CD4-positive, alpha-beta memory T cell (primary cell): ENCODE measurements at regions of chr2 and their contacts with region 1.

Region 1: DNA sequence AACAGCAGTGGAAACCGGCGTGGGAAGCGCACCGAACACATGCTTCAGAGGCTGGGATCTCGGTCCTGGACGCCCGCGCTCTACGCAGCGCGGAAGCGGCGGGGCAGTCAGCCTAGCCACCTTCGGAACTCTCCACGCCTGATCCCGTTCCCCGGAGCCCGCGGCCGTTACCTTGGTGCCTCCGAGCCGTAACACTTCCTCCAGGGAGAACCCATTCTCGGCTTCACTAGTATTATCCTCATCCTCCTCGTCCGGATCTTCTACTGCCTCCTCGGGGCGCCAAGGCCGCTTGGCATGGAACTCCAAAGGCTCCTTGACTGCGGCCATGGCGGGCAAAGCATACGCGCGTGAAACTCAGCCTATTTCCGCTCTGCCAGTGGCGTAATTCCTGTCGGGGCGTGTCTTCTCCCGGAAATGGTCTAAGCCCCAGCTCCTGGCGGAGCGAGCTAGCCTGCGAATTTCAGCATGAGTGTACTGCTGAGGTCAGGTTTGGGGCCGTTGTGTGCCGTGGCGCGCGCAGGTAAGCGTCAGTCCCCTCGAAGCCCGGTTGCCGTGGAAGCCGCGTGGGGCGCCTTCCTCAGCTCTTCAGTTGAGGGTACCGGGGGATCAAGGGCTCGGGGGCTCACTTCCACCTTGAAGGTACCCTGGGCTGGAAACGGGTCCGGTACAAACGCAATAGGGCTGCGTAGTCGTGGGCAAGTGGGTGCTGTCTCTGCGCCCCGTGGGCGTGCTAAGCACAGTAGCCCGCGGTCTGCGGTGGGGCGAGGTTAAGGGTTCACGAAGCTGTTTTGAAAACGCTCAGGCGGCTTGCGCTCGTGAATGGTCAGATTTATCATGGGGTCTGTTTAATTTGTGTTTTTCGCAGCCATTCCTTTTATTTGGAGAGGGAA is at the starts of genes CEBPZ and NDUFAF7:
- DNase-seq: peak; percentile 85 to 94 (median 88)
- H3K4me3 ChIP-seq: peak within 1 kb of the TSS; percentile 94 to 98
- H3K4me3 Mint-ChIP-seq: no peak within 1 kb of the TSS
- H3K27ac ChIP-seq: peak within 1 kb of the TSS; percentile 86
- H3K27ac Mint-ChIP-seq: no peak within 1 kb of the TSS
- H3K4me1 ChIP-seq: peaks cover 46% of the 10 kb centered on the region
- H3K4me1 Mint-ChIP-seq: peaks cover 22 to 41% (median 32%) of the 10 kb centered on the region in 4 donors
- H3K27me3 ChIP-seq: no peaks in the 10 kb centered on the region
- H3K27me3 Mint-ChIP-seq: no peaks in the 10 kb centered on the region
- total RNA-seq, gene CEBPZ: 68.5 to 70.9 TPM
- total RNA-seq, gene NDUFAF7: 36.8 to 37.9 TPM

Region 2: DNA sequence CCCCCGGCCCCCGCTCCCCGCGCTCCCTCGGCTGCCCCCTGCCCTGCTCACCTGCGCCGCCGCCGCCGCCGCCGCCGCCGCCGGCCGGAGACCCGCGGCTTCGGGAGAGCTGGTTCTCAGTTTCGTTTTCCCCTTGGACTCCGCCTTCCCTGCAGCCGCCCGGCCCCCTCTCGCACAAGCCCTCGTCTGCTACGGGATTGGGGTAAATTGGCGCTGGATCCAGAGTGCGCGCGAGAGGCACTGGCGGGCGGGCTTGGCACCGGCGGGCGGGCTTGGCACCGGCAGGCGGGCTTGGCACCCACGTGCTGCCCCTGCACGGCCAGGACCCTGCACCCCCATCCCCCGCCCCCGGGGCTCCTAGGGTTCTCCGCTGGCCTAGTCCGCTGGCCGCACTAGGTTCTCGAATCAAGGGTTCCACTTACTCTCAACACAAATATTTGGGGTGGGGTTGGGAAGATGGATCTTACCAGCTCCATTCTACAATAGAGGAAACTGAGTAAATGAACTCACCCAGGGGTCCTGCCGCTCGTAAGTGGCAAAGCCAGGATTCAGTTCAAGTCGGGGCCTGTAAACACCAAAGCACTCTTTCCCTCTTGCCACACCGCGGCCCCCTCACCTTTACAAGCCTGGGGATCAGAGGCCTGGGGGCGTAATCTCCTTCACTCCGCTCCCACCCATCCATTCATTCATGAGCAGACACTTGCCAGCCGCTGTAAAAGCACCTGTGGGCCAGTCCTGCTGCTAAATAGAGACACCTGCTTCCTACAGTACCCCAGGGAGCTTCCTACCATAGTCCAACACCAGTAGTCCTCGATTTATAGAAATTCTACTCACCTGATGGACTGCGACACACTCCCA is 74.4 kb before region 1 on chr2 and contains the start of gene EIF2AK2:
- CTCF ChIA-PET with region 1: no interaction called
- POLR2A ChIA-PET with region 1: interaction called, 6 read pairs
- intact Hi-C with region 1: loop called (anchors 1 kb)
- DNase-seq: peak; percentile 84 to 90 (median 87)
- H3K4me3 ChIP-seq: peak within 1 kb of the TSS; percentile 62 to 63
- H3K4me3 Mint-ChIP-seq: peak within 1 kb of the TSS; percentile 88 to 96 (median 94)
- H3K27ac ChIP-seq: peak within 1 kb of the TSS; percentile 72
- H3K27ac Mint-ChIP-seq: peak within 1 kb of the TSS; percentile 86 to 96 (median 92)
- H3K4me1 ChIP-seq: peaks cover 26% of the 10 kb centered on the region
- H3K4me1 Mint-ChIP-seq: peaks cover 34 to 54% (median 49%) of the 10 kb centered on the region in 4 donors
- H3K27me3 ChIP-seq: no peaks in the 10 kb centered on the region
- H3K27me3 Mint-ChIP-seq: no peaks in the 10 kb centered on the region
- total RNA-seq, gene EIF2AK2: 28.8 to 31.6 TPM

Region 3: GRCh38 chr2:37168217-37168981 is 63.1 kb before region 1 on chr2:
- CTCF ChIA-PET with region 1: interaction called, 4 read pairs
- POLR2A ChIA-PET with region 1: no interaction called
- intact Hi-C with region 1: loop called (anchors 1 kb)
- DNase-seq: peak in 4 of 5 donors; percentile 32 to 45 (median 36)
- H3K4me3 ChIP-seq: no peak overlapping the region
- H3K4me3 Mint-ChIP-seq: no peak overlapping the region
- H3K27ac ChIP-seq: no peak overlapping the region
- H3K27ac Mint-ChIP-seq: no peak overlapping the region
- H3K4me1 ChIP-seq: no peaks in the 10 kb centered on the region
- H3K4me1 Mint-ChIP-seq: no peaks in the 10 kb centered on the region
- H3K27me3 ChIP-seq: no peaks in the 10 kb centered on the region
- H3K27me3 Mint-ChIP-seq: no peaks in the 10 kb centered on the region

Region 4: GRCh38 chr2:37196320-37197195 is 34.9 kb before region 1 on chr2 and contains the start of gene CEBPZOS:
- CTCF ChIA-PET with region 1: no interaction called
- POLR2A ChIA-PET with region 1: interaction called, 22 read pairs
- intact Hi-C with region 1: loop called (anchors 2 kb)
- DNase-seq: peak; percentile 88 to 90 (median 89)
- H3K4me3 ChIP-seq: peak within 1 kb of the TSS; percentile 80 to 93
- H3K4me3 Mint-ChIP-seq: peak within 1 kb of the TSS; percentile 97 to 100 (median 98)
- H3K27ac ChIP-seq: peak within 1 kb of the TSS; percentile 79
- H3K27ac Mint-ChIP-seq: peak within 1 kb of the TSS; percentile 87 to 100 (median 97)
- H3K4me1 ChIP-seq: peaks cover 41% of the 10 kb centered on the region
- H3K4me1 Mint-ChIP-seq: peaks cover 11 to 36% (median 19%) of the 10 kb centered on the region in 4 donors
- H3K27me3 ChIP-seq: no peaks in the 10 kb centered on the region
- H3K27me3 Mint-ChIP-seq: no peaks in the 10 kb centered on the region
- total RNA-seq, gene CEBPZOS: 39.6 to 41.0 TPM

Region 5: DNA sequence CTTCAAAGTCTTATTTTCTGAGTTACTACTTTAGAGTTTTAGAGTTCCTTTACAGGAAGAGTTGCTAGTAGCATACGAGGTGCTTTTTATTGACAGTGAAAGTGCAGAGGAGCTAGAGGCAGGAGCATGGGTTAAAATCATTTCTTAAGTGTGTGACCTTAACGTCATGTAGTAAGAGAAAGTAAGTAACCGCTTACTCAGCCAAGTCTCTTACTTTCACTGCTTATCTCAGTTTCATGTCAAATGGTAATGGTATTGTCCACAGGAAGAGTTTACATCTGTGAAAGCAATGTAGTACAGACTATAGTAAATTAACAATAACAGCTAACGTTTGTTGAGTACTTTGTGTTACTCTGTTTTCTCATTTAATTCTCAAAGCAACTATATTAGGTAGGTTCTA is 12.5 kb after region 1 on chr2:
- CTCF ChIA-PET with region 1: interaction called, 5 read pairs
- POLR2A ChIA-PET with region 1: interaction called, 20 read pairs
- intact Hi-C with region 1: no loop called
- DNase-seq: peak in 3 of 5 donors; percentile 6 to 22 (median 16)
- H3K4me3 ChIP-seq: no peak overlapping the region
- H3K4me3 Mint-ChIP-seq: peak overlapping the region in 4 of 8 donors; percentile 22 to 64 (median 50)
- H3K27ac ChIP-seq: peak overlapping the region; percentile 54
- H3K27ac Mint-ChIP-seq: peak overlapping the region in 6 of 7 donors; percentile 62 to 96 (median 88)
- H3K4me1 ChIP-seq: peaks cover 22% of the 10 kb centered on the region
- H3K4me1 Mint-ChIP-seq: peaks cover 8 to 31% (median 24%) of the 10 kb centered on the region in 4 donors
- H3K27me3 ChIP-seq: no peaks in the 10 kb centered on the region
- H3K27me3 Mint-ChIP-seq: no peaks in the 10 kb centered on the region

Region 6: GRCh38 chr2:37324786-37325624 is 93.5 kb after region 1 on chr2 and contains the start of gene PRKD3:
- CTCF ChIA-PET with region 1: interaction called, 3 read pairs
- POLR2A ChIA-PET with region 1: interaction called, 5 read pairs
- intact Hi-C with region 1: loop called (anchors 1 kb)
- DNase-seq: peak; percentile 70 to 74 (median 73)
- H3K4me3 ChIP-seq: peak within 1 kb of the TSS; percentile 72 to 85
- H3K4me3 Mint-ChIP-seq: peak within 1 kb of the TSS; percentile 97 to 99 (median 98)
- H3K27ac ChIP-seq: peak within 1 kb of the TSS; percentile 39
- H3K27ac Mint-ChIP-seq: peak within 1 kb of the TSS; percentile 93 to 98 (median 98)
- H3K4me1 ChIP-seq: peaks cover 36% of the 10 kb centered on the region
- H3K4me1 Mint-ChIP-seq: peaks cover 19 to 44% (median 27%) of the 10 kb centered on the region in 4 donors
- H3K27me3 ChIP-seq: no peaks in the 10 kb centered on the region
- H3K27me3 Mint-ChIP-seq: peaks cover 6 to 8% of the 10 kb centered on the region in 2 donors
- total RNA-seq, gene PRKD3: 34.6 to 37.7 TPM